ENCODE measurements at regions of chr1 and their contacts with region 1.

Region 1: DNA sequence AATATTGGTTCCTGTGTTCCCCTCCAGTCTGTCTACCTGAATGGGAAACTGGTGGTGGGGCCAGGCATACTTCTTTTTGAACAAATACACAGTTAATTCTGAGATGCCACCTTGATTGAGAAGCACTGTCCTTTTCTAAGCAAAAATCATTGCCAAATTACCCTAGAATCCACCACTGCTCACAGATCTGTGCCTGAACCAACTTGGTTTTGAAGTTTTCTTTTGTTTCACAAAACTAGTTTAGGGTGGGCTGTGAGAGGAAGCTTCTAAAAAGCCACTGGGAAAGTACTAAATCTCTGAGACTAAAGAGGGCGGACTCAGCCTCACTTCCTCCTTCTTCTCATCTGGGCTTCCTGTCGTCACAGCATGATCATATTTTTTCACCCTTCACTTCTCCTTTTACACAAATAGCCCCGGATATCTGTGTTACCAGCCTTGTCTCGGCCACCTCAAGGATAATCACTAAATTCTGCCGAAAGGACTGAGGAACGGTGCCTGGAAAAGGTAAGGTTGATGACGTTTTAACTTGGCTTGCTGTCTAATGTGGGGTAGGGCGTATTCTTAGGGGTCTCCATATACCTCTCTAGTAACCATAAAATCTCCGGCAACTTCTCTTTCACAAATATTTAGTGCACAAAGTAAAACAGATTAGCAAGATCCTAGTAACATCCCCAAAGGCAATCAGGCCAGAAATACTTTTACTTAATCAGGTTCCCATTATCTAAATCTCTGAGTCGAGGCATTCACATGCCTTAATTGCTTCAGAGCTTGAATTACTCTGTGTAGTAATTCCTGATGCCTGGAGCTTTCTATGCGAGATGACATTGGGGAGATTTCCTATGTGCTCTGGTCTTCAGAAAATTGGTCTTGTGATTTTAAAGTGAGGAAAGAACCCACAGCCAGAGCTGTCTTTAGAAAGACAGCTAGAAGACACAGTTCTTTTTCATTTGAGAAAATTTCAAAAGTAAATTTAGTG is at the start of gene CD53:
- DNase-seq: peak; percentile 39
- H3K4me3 Mint-ChIP-seq: peak within 1 kb of the TSS; percentile 98
- H3K27ac Mint-ChIP-seq: peak within 1 kb of the TSS; percentile 98
- H3K4me1 Mint-ChIP-seq: peaks cover 34% of the 10 kb centered on the region
- H3K27me3 Mint-ChIP-seq: no peaks in the 10 kb centered on the region
- total RNA-seq, gene CD53: 161 and 165 TPM in 2 replicates

Region 2: GRCh38 chr1:110896090-110896489 is 23.1 kb after region 1 on chr1:
- intact Hi-C with region 1: loop called (anchors 2 kb)
- DNase-seq: no peak
- H3K4me3 Mint-ChIP-seq: no peak overlapping the region
- H3K27ac Mint-ChIP-seq: peak overlapping the region; percentile 59
- H3K4me1 Mint-ChIP-seq: peaks cover 76% of the 10 kb centered on the region
- H3K27me3 Mint-ChIP-seq: no peaks in the 10 kb centered on the region

Region 3: GRCh38 chr1:110916669-110917306 is 43.8 kb after region 1 on chr1:
- intact Hi-C with region 1: no loop called
- DNase-seq: peak; percentile 40
- H3K4me3 Mint-ChIP-seq: peak overlapping the region; percentile 42
- H3K27ac Mint-ChIP-seq: peak overlapping the region; percentile 13
- H3K4me1 Mint-ChIP-seq: peaks cover 19% of the 10 kb centered on the region
- H3K27me3 Mint-ChIP-seq: no peaks in the 10 kb centered on the region

Region 4: GRCh38 chr1:110963691-110964399 is 90.8 kb after region 1 on chr1 and contains the start of gene LRIF1:
- intact Hi-C with region 1: loop called (anchors 1 kb)
- DNase-seq: peak; percentile 100
- H3K4me3 Mint-ChIP-seq: peak within 1 kb of the TSS; percentile 89
- H3K27ac Mint-ChIP-seq: peak within 1 kb of the TSS; percentile 95
- H3K4me1 Mint-ChIP-seq: peaks cover 36% of the 10 kb centered on the region
- H3K27me3 Mint-ChIP-seq: peaks cover 13% of the 10 kb centered on the region
- total RNA-seq, gene LRIF1: 15.2 and 15.7 TPM in 2 replicates

Region 5: GRCh38 chr1:111481387-111482221 is 608.6 kb after region 1 on chr1:
- intact Hi-C with region 1: loop called (anchors 10 kb)
- DNase-seq: peak; percentile 42
- H3K4me3 Mint-ChIP-seq: no peak overlapping the region
- H3K27ac Mint-ChIP-seq: no peak overlapping the region
- H3K4me1 Mint-ChIP-seq: peaks cover 27% of the 10 kb centered on the region
- H3K27me3 Mint-ChIP-seq: peaks cover 9% of the 10 kb centered on the region

Region 6: GRCh38 chr1:111619635-111620440 is 746.8 kb after region 1 on chr1 and contains the start of gene RAP1A:
- intact Hi-C with region 1: loop called (anchors 10 kb)
- DNase-seq: peak; percentile 87
- H3K4me3 Mint-ChIP-seq: peak within 1 kb of the TSS; percentile 96
- H3K27ac Mint-ChIP-seq: peak within 1 kb of the TSS; percentile 88
- H3K4me1 Mint-ChIP-seq: peaks cover 66% of the 10 kb centered on the region
- H3K27me3 Mint-ChIP-seq: no peaks in the 10 kb centered on the region
- total RNA-seq, gene RAP1A: 219 TPM in 2 replicates